ENCODE measurements at regions of chr14 and their contacts with region 1.

Region 1: DNA sequence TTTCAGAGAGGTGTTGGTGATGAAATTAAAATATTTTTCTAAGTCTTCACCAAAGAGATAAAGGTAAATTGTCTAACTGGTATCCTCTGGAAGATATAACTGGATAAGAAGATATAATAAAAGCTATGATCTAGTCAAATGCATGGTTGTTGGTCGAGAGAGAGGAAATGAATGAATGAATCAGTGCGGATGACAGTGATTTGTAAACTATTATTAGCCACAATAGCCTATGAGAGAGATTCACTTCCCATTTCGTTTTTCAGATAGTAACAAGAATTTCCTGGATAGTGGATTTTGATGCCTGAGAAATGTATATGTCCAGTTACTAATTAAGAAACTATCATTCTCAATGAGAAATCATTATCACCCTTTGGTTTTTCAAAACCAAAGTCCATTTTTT is 63.1 kb downstream of the HEATR5A start:
- DNase-seq: no peak
- ATAC-seq: no peak

Region 2: DNA sequence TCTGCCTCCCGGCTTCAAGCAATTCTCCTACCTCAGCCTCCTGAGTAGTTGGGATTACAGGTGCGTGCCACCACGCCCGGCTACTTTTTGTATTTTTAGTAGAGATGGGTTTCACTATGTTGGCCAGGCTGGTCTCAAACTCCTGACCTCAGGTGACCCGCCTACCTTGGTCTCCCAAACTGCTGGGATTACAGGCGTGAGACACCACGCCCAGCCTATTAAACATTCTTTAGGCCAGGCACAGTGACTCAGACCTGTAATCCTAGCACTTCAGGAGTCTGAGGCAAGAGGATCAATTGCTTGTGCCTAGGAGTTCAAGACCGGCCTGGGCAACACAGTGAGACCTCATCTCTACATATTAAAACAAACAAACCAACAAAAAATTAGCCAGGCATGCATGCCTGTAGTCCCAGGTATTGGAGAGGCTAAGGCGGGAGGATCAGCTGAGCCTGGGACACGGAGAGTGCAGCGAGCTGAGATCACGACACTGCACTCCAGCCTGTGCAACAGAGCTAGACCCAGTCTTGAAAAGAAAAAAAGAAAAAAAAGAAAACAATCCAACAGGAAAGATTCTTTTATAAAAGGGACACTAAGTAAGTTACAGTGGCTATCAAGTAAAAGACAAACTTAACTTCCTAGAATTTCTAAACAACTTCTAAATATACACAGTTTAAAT is 219.9 kb before region 1 on chr14:
- intact Hi-C with region 1: loop called in 1 of 2 experiments (anchors 10 kb)
- DNase-seq: no peak
- ATAC-seq: no peak

Region 3: GRCh38 chr14:31159682-31160296 is 197.5 kb before region 1 on chr14:
- intact Hi-C with region 1: loop called in 1 of 2 experiments (anchors 10 kb)
- DNase-seq: no peak
- ATAC-seq: no peak

Region 4: GRCh38 chr14:31307198-31307597 is 50.1 kb before region 1 on chr14:
- intact Hi-C with region 1: no loop called
- DNase-seq: no peak
- ATAC-seq: no peak

Region 5: DNA sequence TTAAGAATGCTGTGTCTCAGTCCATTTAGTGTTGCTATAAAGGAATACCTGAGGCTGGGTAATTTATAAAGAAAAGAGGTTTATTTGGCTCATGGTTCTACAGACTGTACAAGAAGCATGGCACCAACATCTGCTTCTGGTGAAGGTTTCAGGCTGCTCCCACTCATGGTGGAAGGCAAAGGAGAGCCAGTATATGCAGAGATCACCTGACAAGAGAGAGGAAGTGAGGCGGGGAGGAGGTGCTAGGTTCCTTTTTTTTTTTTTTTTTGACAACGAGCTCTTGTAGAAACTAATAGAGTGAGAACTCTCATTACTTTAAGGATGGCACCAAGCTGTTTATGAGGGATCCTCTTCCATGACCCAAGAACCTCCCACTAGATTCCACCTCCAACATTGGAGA is 325.5 kb after region 1 on chr14:
- intact Hi-C with region 1: no loop called
- DNase-seq: no peak
- ATAC-seq: no peak